ENCODE measurements at regions of chr9 and their contacts with region 1.

Region 1: GRCh38 chr9:70484210-70485130 is 70.0 kb upstream of the KLF9 start:
- DNase-seq: peak; percentile 35
- ATAC-seq: peak; percentile 94
- H3K4me3 ChIP-seq: no peak overlapping the region
- H3K27ac ChIP-seq: no peak overlapping the region
- H3K4me1 ChIP-seq: peaks cover 2% of the 10 kb centered on the region; the same call in 1 of the 2 replicates
- H3K27me3 ChIP-seq: no peaks in the 10 kb centered on the region
- CTCF ChIP-seq: peak; percentile 78

Region 2: GRCh38 chr9:70340572-70340971 is 143.9 kb before region 1 on chr9:
- CTCF ChIA-PET with region 1: interaction called, 5 read pairs
- POLR2A ChIA-PET with region 1: no interaction called
- in situ Hi-C with region 1: no loop called
- intact Hi-C with region 1: loop called (anchors 5 kb)
- DNase-seq: no peak
- ATAC-seq: no peak
- H3K4me3 ChIP-seq: no peak overlapping the region
- H3K27ac ChIP-seq: no peak overlapping the region
- H3K4me1 ChIP-seq: no peaks in the 10 kb centered on the region
- H3K27me3 ChIP-seq: no peaks in the 10 kb centered on the region
- CTCF ChIP-seq: no peak

Region 3: DNA sequence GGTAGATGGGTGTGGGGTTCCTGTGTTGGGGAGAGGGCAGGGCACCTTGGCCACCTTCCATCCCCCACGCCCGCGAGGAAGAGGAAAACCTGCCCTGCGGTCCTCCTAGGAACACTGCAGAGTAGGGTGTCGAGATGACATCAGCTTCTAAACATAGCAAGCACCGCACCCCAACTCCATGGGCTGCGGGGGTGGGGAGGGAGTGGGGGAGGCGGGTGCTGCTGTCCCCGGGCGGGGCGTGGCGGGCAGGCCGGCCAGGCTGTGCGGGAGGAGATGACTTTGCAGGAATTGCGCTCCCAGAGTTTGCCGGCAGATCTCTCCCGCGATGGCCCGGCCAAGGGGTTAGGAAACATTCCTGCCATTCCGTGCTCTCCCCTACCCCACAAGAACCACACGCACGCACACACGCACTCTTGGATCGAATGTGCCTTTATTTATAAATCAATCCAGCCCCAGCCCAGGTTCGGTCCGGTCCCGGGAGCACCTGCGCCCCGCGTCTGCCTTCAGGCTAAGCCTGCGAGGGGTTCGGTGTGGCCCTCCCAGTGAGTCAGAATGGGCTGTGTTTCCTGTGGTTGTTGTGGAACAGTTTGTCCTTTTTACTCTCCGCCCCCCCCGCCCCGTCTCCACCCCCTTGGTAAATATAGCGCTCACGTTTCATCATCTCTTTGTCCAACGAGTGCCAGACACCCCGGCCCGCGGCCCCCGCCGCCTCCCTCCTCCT is 64.8 kb before region 1 on chr9:
- CTCF ChIA-PET with region 1: interaction called, 3 read pairs
- POLR2A ChIA-PET with region 1: no interaction called
- in situ Hi-C with region 1: no loop called
- intact Hi-C with region 1: loop called (anchors 5 kb)
- DNase-seq: peak; percentile 67
- ATAC-seq: peak; percentile 44
- H3K4me3 ChIP-seq: peak overlapping the region; percentile 44 to 66
- H3K27ac ChIP-seq: peak overlapping the region; percentile 57
- H3K4me1 ChIP-seq: no peaks in the 10 kb centered on the region
- H3K27me3 ChIP-seq: no peaks in the 10 kb centered on the region
- CTCF ChIP-seq: no peak

Region 4: GRCh38 chr9:70805949-70806348 is 321.5 kb after region 1 on chr9:
- CTCF ChIA-PET with region 1: no interaction called
- POLR2A ChIA-PET with region 1: no interaction called
- in situ Hi-C with region 1: no loop called
- intact Hi-C with region 1: no loop called
- DNase-seq: no peak
- ATAC-seq: no peak
- H3K4me3 ChIP-seq: no peak overlapping the region
- H3K27ac ChIP-seq: no peak overlapping the region
- H3K4me1 ChIP-seq: no peaks in the 10 kb centered on the region
- H3K27me3 ChIP-seq: no peaks in the 10 kb centered on the region
- CTCF ChIP-seq: no peak

Region 5: DNA sequence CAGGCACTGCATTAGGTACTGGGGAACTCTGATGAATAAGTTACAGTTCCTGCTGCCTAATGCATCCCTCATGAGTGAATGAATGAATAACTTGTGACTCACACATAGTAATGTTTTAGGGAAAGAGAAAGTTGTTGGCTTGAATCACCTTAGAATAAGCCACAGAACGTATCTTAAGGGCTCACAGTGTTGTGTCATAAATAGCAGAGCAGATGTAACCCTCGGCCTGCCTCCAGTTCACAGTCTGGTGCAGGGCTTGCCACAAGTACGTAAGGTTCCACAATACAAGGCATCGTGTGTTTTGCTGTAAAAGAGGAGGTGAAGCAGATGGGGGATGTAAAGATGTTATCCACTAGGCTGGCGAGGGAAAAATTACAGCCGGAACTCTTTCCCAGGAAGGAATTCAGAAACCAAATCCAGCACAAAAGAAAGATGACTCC is 418.2 kb after region 1 on chr9:
- CTCF ChIA-PET with region 1: no interaction called
- POLR2A ChIA-PET with region 1: no interaction called
- in situ Hi-C with region 1: no loop called
- intact Hi-C with region 1: no loop called
- DNase-seq: peak; percentile 33
- ATAC-seq: peak; percentile 68; the same call in 1 of the 2 replicates
- H3K4me3 ChIP-seq: no peak overlapping the region
- H3K27ac ChIP-seq: no peak overlapping the region
- H3K4me1 ChIP-seq: no peaks in the 10 kb centered on the region
- H3K27me3 ChIP-seq: no peaks in the 10 kb centered on the region
- CTCF ChIP-seq: no peak

Measured in Panc1 (cell line).